ENCODE measurements at regions of chr10 and their contacts with region 1.

Region 1: DNA sequence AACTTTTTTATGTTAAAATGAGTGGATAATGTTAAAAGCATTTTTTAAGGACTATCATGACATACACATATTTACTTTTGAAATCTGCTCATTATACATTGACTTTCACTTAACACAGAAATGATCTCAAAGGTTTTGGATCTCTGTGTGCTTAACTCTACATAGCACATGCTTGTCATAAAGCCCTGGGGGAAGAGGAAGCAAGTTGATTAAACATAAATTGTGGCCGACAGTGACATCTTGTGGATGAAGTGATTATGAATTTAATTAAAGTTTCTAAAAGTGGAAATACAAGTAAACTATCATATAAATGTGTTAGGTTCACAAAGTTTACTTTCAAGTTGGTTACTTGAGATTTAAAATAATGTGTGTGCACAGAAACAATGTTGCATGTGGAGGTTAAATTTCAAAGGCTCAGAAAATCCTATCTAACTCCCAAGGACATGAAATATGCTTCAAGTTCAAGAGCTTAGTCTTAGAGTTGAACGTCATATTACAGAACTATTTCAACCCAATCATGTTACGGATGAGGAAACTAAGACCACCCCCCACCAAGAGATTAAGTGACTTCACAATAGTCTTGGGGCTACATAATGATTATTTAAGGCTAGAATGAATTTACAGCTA is 1247.7 kb downstream of the GATA3 start:
- DNase-seq: peak; percentile 79
- H3K4me3 ChIP-seq: no peak overlapping the region
- H3K27ac ChIP-seq: no peak overlapping the region
- H3K4me1 ChIP-seq: no peaks in the 10 kb centered on the region
- H3K27me3 ChIP-seq: no peaks in the 10 kb centered on the region; the same call in 1 of the 2 replicates

Region 2: DNA sequence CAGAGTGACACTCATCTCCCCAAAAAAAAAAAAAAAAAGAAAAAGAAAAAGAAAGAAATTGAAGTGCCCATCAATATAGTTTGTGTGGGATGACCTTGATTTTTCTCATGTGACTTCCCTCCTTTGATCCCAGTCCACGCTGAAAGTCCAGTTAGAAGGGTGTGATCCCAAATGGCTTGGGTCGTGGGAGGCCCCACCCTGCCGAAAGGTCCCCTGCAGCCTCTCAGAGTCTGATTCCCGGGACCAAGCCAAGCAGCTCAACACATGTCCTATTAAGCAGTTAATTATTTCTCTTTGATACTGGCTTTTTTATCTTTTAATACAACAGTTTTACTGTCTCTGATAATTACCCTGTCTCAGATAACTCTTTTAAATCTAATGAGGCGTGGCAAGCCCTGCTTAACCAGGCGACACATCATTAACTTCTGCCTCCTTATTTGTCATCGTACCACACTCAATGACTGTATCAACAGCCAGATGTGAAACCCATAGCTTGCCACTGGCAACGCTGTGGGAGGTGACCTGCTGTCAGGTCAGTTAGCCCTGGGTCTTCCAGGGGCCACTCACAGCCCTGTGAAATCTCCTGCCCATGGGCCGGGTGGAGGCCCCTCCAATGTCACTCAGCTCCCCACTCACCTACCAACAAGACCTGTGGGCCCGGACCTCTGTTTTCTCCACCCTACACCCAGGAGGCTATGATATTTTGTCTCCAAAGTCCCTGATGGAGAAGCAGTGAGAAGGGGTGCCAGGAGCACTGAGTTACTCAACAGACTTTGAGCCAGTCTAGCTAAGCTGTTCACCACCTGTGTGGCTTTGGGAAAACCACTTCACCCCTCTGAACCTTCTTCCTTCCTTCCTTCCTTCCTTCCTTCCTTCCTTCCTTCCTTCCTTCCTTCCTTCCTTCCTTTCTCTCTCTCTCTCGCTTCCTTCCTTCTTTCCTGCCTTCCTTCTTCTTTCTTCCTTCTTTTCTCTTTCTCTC is 1781.4 kb before region 1 on chr10:
- in situ Hi-C with region 1: loop called (anchors 25 kb)
- DNase-seq: no peak
- H3K4me3 ChIP-seq: no peak overlapping the region
- H3K27ac ChIP-seq: no peak overlapping the region
- H3K4me1 ChIP-seq: no peaks in the 10 kb centered on the region
- H3K27me3 ChIP-seq: no peaks in the 10 kb centered on the region; the same call in 1 of the 2 replicates

Region 3: GRCh38 chr10:7866176-7866575 is 1436.1 kb before region 1 on chr10:
- in situ Hi-C with region 1: loop called (anchors 10 kb)
- DNase-seq: no peak
- H3K4me3 ChIP-seq: no peak overlapping the region
- H3K27ac ChIP-seq: no peak overlapping the region
- H3K4me1 ChIP-seq: no peaks in the 10 kb centered on the region
- H3K27me3 ChIP-seq: no peaks in the 10 kb centered on the region

Region 4: GRCh38 chr10:9211228-9211627 is 91.0 kb before region 1 on chr10:
- in situ Hi-C with region 1: loop called (anchors 10 kb)
- DNase-seq: peak; percentile 25
- H3K4me3 ChIP-seq: no peak overlapping the region
- H3K27ac ChIP-seq: no peak overlapping the region
- H3K4me1 ChIP-seq: no peaks in the 10 kb centered on the region
- H3K27me3 ChIP-seq: no peaks in the 10 kb centered on the region; the same call in 1 of the 2 replicates

Region 5: DNA sequence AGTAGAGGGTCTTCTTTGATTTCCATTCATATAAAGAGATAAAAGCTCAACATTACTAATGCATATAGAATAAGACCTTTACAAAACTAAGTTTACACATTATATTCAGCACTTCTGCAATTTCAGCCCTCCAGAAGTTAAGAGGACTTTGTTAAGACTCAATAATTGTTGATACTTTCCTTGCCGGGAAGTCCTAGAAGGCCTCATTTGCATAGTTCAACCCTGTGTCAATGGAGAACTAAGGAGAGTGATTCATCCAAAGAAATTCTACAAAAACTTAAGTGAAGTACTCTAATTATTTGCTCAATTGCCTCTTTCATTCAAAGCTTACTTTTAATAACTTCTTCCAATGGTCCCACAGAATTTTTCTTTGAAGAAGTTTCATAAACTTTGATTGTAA is 655.1 kb after region 1 on chr10:
- in situ Hi-C with region 1: no loop called
- DNase-seq: no peak
- H3K4me3 ChIP-seq: no peak overlapping the region
- H3K27ac ChIP-seq: no peak overlapping the region
- H3K4me1 ChIP-seq: no peaks in the 10 kb centered on the region
- H3K27me3 ChIP-seq: no peaks in the 10 kb centered on the region

Measured in GM23248 (cell line).